Common myeloid progenitor, CD34-positive (primary cell): ENCODE measurements at regions of chr7 and their contacts with region 1.

Region 1: DNA sequence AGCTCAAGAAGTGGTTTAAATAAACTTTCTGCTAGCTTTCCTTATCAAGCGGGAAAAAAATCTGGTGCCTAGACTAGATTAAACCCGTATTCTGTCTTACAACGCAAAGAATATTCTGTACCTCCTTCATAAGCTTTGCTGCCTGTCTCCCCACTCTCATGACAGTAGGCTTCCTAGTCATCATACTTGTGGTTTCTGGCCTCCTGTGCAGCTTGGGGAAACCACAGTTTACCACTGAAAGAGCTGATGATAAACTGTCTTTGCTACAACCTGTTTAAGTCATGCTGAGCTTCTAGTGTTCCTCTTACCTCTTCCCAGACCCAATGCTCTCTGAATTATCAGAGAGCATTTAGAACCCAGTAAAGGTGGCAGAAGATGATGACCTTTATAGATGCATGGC is 55.0 kb downstream of the PODXL start:
- DNase-seq: peak; percentile 40 to 88 (median 87)
- H3K4me3 ChIP-seq: no peak overlapping the region
- H3K27ac ChIP-seq: no peak overlapping the region
- H3K4me1 ChIP-seq: peaks cover 0 to 26% (median 21%) of the 10 kb centered on the region in 4 experiments
- H3K27me3 ChIP-seq: no peaks in the 10 kb centered on the region

Region 2: GRCh38 chr7:131513245-131514061 is 12.0 kb after region 1 on chr7:
- CTCF ChIA-PET with region 1: interaction called, 113 read pairs
- POLR2A ChIA-PET with region 1: no interaction called
- DNase-seq: peak; percentile 82 to 90 (median 89)
- H3K4me3 ChIP-seq: peak overlapping the region in 2 of 7 experiments; percentile 20 to 35
- H3K27ac ChIP-seq: no peak overlapping the region
- H3K4me1 ChIP-seq: peaks cover 0 to 13% (median 5%) of the 10 kb centered on the region in 4 experiments
- H3K27me3 ChIP-seq: peaks cover 0 to 2% (median 0%) of the 10 kb centered on the region in 5 experiments